Left ventricle myocardium superior (tissue), 1 donor: ENCODE measurements at regions of chr5 and their contacts with region 1.

Region 1: DNA sequence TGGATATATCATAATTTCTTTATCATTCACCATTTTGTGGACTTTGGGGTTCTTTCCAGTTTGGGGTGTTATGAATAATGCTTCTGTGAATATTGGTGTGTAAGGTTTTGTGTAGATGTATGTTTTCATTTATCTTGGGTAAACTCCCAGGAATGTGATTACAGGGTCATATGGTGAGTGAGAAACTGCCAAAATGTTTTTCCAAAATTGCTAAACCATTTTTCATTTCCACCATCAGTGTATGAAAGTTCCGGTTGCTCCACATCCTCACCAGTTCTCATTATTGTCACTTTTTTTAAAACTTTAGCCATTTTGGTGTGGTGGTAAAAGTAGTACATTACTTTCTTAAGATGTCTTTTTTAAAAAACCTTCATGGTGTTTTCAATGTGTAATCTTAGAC is 152.9 kb downstream of the NIPBL start:
- DNase-seq: no peak
- ATAC-seq: no peak

Region 2: GRCh38 chr5:37165761-37166160 is 136.3 kb after region 1 on chr5:
- intact Hi-C with region 1: loop called (anchors 10 kb)
- DNase-seq: no peak
- ATAC-seq: no peak

Region 3: DNA sequence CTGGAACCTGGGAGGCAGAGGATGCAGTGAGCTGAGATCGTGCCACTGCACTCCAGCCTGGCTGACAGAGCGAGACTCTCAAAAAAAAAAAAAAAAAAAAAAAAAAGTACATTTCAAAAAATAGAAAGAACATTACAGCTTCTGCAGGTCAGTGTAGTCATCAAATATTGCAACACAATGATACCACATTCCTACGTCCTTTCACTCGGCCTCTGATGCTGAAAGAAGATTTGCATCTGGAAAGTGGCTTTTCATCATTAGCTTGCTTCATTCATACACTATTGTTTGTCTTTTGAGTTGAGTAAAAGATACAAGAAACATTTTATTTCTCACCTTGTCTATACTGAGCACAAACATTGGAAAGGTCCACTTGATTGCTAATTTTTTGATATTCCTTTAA is 279.4 kb after region 1 on chr5:
- intact Hi-C with region 1: no loop called
- DNase-seq: no peak
- ATAC-seq: no peak